Body of pancreas (tissue), 4 donors: ENCODE measurements at regions of chr7 and their contacts with region 1.

Region 1: DNA sequence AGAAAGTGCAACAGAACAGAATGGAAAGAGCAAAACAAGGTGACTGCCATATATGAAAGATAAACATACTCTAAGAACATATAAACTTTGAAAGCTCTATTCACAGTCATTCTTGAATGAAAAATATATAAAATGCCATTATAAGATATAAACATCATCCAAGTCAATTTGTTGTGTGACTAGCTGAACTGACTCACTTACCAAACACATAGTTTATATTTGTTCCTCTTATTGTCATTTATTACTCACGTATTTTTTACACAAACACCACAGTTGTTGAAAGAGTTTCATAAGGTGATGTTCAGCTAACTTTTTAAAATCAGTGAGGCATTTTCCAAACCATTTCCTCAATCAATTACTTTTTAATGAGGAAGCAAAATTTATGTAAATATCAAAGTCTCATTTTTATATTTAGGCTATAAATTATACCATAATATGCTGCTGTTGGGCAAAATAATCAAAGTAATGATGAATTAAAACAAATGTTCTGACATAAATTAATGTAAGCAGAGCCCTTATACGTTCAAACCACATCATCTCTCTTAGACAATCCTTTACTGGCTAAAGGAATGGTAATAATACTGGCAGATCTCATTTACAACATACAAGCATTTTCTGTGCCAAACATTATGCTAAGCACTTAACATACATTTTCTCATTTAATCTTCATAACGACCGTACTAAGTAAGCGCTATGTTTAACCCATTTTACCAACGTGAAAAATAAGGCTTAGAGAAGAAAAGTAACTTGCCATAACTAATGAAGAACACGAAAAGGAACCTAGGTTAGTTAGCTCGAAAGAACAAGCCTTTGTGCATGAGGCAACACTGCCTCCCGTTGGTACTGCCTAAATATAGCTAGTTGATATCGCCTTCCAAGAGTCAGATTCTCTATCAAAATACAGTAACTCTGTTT is 7.3 kb downstream of the LRRN3 start:
- DNase-seq: peak in 1 of 4 donors; percentile 10
- ATAC-seq: no peak
- H3K4me3 ChIP-seq: no peak overlapping the region
- H3K27ac ChIP-seq: no peak overlapping the region
- H3K4me1 ChIP-seq: peaks cover 14% of the 10 kb centered on the region
- H3K27me3 ChIP-seq: no peaks in the 10 kb centered on the region
- CTCF ChIP-seq: peak in 5 of 7 experiments; percentile 16 to 40 (median 39)
- POLR2A ChIP-seq: no peak

Region 2: DNA sequence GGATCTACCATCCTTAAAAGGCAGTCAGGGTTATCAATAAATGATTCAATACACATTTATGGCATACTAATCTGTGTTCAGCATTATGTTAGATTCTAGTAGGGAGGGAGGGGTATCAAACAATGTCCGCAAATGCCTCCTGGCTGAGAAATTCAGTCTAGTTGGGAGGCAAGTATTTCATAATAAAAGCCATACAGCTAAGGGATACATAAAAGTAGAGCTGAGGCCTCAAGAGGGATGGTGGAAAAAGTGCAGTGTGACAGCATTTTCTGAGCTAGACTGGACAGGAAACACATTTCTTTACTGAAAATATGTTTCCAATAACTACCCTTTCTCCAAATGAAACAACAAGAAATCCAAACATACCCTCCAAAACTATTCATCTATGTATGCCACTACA is 160.1 kb before region 1 on chr7:
- intact Hi-C with region 1: no loop called
- DNase-seq: no peak
- ATAC-seq: no peak
- H3K4me3 ChIP-seq: no peak overlapping the region
- H3K27ac ChIP-seq: no peak overlapping the region
- H3K4me1 ChIP-seq: no peaks in the 10 kb centered on the region
- H3K27me3 ChIP-seq: no peaks in the 10 kb centered on the region
- CTCF ChIP-seq: no peak
- POLR2A ChIP-seq: no peak

Region 3: GRCh38 chr7:110960811-110961210 is 137.5 kb before region 1 on chr7:
- intact Hi-C with region 1: no loop called
- DNase-seq: no peak
- ATAC-seq: no peak
- H3K4me3 ChIP-seq: no peak overlapping the region
- H3K27ac ChIP-seq: no peak overlapping the region
- H3K4me1 ChIP-seq: no peaks in the 10 kb centered on the region
- H3K27me3 ChIP-seq: no peaks in the 10 kb centered on the region
- CTCF ChIP-seq: no peak
- POLR2A ChIP-seq: no peak

Region 4: GRCh38 chr7:111147708-111148533 is 49.7 kb after region 1 on chr7:
- intact Hi-C with region 1: no loop called
- DNase-seq: no peak
- ATAC-seq: no peak
- H3K4me3 ChIP-seq: no peak overlapping the region
- H3K27ac ChIP-seq: no peak overlapping the region
- H3K4me1 ChIP-seq: no peaks in the 10 kb centered on the region
- H3K27me3 ChIP-seq: no peaks in the 10 kb centered on the region
- CTCF ChIP-seq: no peak
- POLR2A ChIP-seq: no peak

Region 5: DNA sequence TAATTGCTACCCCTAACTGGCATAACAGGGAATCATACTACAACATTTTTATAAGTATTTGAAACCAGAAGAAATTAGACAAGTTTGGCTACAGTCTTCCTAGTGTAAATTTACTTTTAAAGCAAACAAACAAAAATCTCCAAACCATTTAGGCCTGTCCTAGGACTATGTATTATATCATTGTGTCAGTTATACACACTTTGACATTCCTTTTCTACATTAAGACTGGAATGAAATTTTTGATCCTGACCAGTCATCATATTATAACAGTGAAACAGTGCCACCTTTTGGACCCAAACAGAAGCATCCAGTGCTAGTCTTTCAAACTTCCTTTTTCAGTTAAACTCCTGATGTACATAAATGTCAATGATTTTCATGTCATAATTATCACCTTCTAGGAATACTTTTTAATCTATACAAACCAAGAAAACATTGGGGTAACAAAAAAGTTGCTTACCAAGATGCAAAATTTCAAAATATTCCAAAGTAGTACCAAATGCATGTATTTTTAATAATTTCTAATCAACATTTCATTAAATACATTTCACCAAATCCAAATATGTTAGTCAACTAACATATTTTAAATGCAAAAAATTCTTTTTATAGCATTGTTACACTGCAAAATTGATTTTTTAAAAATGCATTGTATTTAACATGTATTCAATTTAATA is 388.3 kb after region 1 on chr7:
- intact Hi-C with region 1: loop called (anchors 10 kb)
- DNase-seq: peak in 3 of 4 donors; percentile 16 to 40 (median 32)
- ATAC-seq: peak; percentile 62
- H3K4me3 ChIP-seq: no peak overlapping the region
- H3K27ac ChIP-seq: no peak overlapping the region
- H3K4me1 ChIP-seq: no peaks in the 10 kb centered on the region
- H3K27me3 ChIP-seq: no peaks in the 10 kb centered on the region
- CTCF ChIP-seq: peak in 6 of 7 experiments; percentile 43 to 74 (median 72)
- POLR2A ChIP-seq: no peak